Lower lobe of right lung (tissue), 2 donors: ENCODE measurements at regions of chr11 and their contacts with region 1.

Region 1: DNA sequence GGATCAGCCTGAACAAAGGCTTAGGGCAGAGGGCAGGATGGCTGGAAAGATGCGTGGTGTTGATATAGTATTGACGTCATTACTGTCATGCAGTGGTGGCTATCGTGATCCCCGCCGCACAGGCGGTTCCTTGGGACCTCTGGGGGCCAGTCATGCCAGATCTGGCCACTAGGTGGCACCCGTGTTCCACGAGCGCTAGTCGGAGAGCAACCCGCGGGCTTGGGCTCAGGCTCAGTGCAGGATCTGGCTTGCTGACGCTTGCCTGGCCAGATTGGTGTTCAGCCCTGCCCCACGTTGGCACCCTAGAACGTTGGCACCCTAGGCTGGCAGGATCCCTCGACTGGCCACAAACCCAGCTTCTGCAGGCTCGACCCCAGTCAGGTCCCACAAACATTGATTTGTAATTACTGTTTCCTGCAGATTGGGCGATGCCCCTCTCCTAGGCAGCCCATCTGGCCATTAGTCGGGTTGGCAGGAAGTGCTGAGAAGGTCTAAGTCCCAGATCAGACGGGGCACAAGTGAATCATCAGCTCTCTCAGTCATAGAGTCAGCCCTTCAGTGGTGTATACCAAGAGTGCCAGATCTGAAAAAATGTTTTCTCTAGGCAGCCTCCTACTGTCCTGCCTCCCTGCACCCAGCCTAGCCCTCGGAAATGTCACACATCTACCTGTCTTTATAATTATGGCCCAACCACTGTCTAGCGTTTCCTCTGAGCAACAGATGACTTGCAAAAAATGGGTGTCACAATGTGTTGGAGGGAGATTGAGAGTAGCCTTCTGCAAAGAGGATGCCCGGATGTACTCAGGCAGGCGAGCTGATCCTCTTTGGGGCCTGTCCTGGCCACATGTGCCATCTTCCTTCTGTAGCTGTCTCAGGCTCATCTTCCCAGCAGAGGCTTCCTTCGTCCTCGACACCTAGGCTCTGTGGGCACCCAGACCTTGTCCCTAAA is 315.3 kb downstream of the TMEM135 start:
- DNase-seq: peak; percentile 88
- ATAC-seq: peak; percentile 95
- H3K4me3 ChIP-seq: no peak overlapping the region
- H3K27ac ChIP-seq: no peak overlapping the region
- H3K4me1 ChIP-seq: peaks cover 18% of the 10 kb centered on the region
- H3K27me3 ChIP-seq: no peaks in the 10 kb centered on the region
- CTCF ChIP-seq: peak; percentile 99

Region 2: DNA sequence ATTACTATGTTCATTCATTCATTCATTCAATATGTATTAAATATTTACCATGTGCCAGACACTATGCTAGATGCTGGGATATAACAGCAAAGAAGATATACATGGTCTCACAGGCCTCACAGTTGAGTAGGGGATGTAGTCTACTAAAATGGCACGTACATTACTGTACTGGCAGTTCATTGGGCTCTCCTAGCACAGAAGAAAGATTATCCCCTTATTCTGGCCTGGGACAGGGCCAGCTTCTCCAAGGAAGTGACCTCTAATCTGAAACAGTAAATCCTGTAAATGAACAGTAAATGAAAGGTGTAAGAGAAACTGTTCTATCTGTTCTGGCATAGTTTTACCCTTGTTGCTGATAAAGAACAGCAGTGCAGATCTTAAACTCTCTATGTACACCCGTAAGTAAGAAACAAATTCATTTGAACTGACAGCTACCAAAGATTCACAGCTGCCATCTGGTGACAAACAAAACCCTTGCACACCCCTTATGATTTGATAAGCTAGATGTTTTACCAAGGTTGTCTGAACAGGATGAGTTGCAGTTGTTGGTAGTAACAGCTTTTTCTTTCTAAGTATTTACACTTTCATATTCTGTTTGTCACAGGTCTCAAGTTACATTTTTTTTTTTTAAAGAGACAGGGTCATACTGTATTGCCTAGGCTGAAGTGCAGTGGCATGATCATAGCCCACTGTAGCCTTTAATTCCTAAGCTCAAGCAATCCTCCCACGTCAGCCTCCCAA is 52.2 kb before region 1 on chr11:
- intact Hi-C with region 1: no loop called
- DNase-seq: no peak
- ATAC-seq: peak in 1 of 2 donors; percentile 19
- H3K4me3 ChIP-seq: no peak overlapping the region
- H3K27ac ChIP-seq: no peak overlapping the region
- H3K4me1 ChIP-seq: no peaks in the 10 kb centered on the region
- H3K27me3 ChIP-seq: no peaks in the 10 kb centered on the region
- CTCF ChIP-seq: no peak

Region 3: DNA sequence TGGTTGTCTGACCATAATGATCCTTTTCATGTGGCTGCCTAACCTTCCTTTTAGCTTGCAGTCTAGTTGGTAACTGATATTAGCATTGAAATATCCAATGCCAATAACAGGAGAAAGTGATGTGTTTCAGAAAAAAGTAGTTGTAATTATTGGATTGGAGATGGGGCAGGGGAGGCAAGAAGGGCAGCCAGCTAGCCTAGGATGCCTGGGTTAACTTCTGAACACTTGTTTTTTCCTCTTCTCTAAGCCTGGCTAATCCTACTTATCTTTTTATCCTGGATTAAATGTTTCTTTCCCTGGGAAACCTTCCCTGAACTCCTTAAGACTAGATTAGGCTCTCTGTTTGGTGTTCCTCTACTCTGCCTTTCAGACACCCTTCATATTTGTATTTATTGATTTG is 64.9 kb after region 1 on chr11:
- intact Hi-C with region 1: loop called (anchors 10 kb)
- DNase-seq: no peak
- ATAC-seq: no peak
- H3K4me3 ChIP-seq: no peak overlapping the region
- H3K27ac ChIP-seq: no peak overlapping the region
- H3K4me1 ChIP-seq: no peaks in the 10 kb centered on the region
- H3K27me3 ChIP-seq: no peaks in the 10 kb centered on the region
- CTCF ChIP-seq: no peak